ENCODE measurements at regions of chr11 and their contacts with region 1.

Region 1: GRCh38 chr11:114400217-114400914 is at the starts of genes C11orf71 and RBM7:
- DNase-seq: peak; percentile 90
- H3K4me3 Mint-ChIP-seq: peak within 1 kb of the TSS; percentile 95
- H3K27ac Mint-ChIP-seq: peak within 1 kb of the TSS; percentile 99
- H3K4me1 Mint-ChIP-seq: peaks cover 31% of the 10 kb centered on the region
- H3K27me3 Mint-ChIP-seq: no peaks in the 10 kb centered on the region
- CTCF ChIP-seq: no peak
- total RNA-seq, gene C11orf71: 3.8 and 6.7 TPM in 2 replicates
- total RNA-seq, gene RBM7: 22.0 and 26.4 TPM in 2 replicates

Region 2: DNA sequence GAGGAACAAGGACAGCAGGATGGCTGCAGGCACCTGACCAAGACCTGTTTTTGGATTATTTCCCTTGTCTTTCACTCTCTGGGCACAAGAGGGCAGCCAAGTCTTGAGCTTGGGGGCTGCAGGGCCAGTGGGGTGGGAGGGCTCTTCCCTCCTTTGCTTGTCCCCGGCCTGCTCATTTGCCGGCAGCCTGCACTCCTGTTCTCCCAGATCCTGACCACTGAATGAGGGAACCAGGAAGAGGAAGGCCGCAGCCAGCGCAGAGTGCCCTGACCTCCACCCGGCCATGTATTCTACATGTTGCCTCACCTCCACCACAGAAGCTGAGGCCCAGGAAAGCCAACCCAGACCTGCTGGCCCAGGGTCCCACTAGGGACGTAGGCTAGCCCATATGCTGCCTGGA is 119.7 kb before region 1 on chr11:
- CTCF ChIA-PET with region 1: no interaction called
- intact Hi-C with region 1: loop called (anchors 5 kb)
- DNase-seq: peak; percentile 78
- H3K4me3 Mint-ChIP-seq: no peak overlapping the region
- H3K27ac Mint-ChIP-seq: peak overlapping the region; percentile 30
- H3K4me1 Mint-ChIP-seq: peaks cover 65% of the 10 kb centered on the region
- H3K27me3 Mint-ChIP-seq: peaks cover 5% of the 10 kb centered on the region
- CTCF ChIP-seq: peak; percentile 67

Region 3: GRCh38 chr11:114295676-114296604 is 104.4 kb before region 1 on chr11 and contains the start of gene NNMT:
- CTCF ChIA-PET with region 1: no interaction called
- intact Hi-C with region 1: loop called (anchors 5 kb)
- DNase-seq: peak; percentile 65
- H3K4me3 Mint-ChIP-seq: peak within 1 kb of the TSS; percentile 74
- H3K27ac Mint-ChIP-seq: peak within 1 kb of the TSS; percentile 99
- H3K4me1 Mint-ChIP-seq: peaks cover 53% of the 10 kb centered on the region
- H3K27me3 Mint-ChIP-seq: no peaks in the 10 kb centered on the region
- CTCF ChIP-seq: no peak
- total RNA-seq, gene NNMT: 52.7 and 116 TPM in 2 replicates

Region 4: GRCh38 chr11:114348200-114349191 is 51.9 kb before region 1 on chr11:
- CTCF ChIA-PET with region 1: interaction called, 3 read pairs
- intact Hi-C with region 1: loop called (anchors 2 kb)
- DNase-seq: peak; percentile 59
- H3K4me3 Mint-ChIP-seq: no peak overlapping the region
- H3K27ac Mint-ChIP-seq: no peak overlapping the region
- H3K4me1 Mint-ChIP-seq: no peaks in the 10 kb centered on the region
- H3K27me3 Mint-ChIP-seq: no peaks in the 10 kb centered on the region
- CTCF ChIP-seq: peak; percentile 19

Region 5: DNA sequence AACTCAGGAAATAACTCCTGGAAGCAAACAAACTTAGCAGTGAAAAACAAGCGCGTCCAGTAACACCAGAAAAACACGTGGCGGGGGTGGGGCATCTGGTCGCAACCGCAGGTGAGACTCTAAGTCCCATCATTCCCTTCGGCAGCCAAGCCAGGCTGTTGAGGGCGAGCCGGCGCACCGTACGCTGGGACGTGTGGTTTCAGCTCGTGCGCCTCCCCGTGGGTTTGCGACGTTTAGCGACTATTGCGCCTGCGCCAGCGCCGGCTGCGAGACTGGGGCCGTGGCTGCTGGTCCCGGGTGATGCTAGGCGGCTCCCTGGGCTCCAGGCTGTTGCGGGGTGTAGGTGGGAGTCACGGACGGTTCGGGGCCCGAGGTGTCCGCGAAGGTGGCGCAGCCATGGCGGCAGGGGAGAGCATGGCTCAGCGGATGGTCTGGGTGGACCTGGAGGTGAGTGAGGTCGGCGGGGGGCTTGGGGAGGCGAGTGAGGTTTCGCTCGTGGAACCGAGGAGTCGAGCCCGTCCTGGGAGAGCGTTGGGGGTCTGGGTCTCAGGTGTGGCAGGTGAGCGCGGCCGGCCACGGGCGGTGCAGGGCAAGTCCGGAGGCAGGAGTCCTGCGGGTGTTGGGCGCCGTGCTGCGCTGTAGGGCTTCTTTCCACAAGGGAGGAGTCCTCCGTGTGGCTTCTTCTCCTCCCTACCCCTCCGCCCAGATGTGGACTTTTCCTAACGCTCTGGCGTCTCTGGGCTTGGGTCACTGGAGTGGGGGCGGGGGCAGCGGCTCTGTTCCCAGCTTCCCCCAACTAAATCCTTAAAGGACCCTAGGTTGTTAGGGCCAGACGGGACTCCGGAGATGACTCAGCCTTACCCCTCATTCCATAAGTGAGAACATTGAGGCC is 39.1 kb after region 1 on chr11 and contains the start of gene REXO2:
- CTCF ChIA-PET with region 1: interaction called, 3 read pairs
- intact Hi-C with region 1: loop called (anchors 2 kb)
- DNase-seq: peak; percentile 87
- H3K4me3 Mint-ChIP-seq: peak within 1 kb of the TSS; percentile 100
- H3K27ac Mint-ChIP-seq: peak within 1 kb of the TSS; percentile 98
- H3K4me1 Mint-ChIP-seq: peaks cover 26% of the 10 kb centered on the region
- H3K27me3 Mint-ChIP-seq: no peaks in the 10 kb centered on the region
- CTCF ChIP-seq: no peak
- total RNA-seq, gene REXO2: 69.1 and 74.2 TPM in 2 replicates

Region 6: GRCh38 chr11:114472661-114473060 is 72.3 kb after region 1 on chr11:
- CTCF ChIA-PET with region 1: no interaction called
- intact Hi-C with region 1: no loop called
- DNase-seq: no peak
- H3K4me3 Mint-ChIP-seq: no peak overlapping the region
- H3K27ac Mint-ChIP-seq: no peak overlapping the region
- H3K4me1 Mint-ChIP-seq: no peaks in the 10 kb centered on the region
- H3K27me3 Mint-ChIP-seq: no peaks in the 10 kb centered on the region
- CTCF ChIP-seq: no peak